Motor neuron (in vitro differentiated cells): ENCODE measurements at regions of chr11 and their contacts with region 1.

Region 1: DNA sequence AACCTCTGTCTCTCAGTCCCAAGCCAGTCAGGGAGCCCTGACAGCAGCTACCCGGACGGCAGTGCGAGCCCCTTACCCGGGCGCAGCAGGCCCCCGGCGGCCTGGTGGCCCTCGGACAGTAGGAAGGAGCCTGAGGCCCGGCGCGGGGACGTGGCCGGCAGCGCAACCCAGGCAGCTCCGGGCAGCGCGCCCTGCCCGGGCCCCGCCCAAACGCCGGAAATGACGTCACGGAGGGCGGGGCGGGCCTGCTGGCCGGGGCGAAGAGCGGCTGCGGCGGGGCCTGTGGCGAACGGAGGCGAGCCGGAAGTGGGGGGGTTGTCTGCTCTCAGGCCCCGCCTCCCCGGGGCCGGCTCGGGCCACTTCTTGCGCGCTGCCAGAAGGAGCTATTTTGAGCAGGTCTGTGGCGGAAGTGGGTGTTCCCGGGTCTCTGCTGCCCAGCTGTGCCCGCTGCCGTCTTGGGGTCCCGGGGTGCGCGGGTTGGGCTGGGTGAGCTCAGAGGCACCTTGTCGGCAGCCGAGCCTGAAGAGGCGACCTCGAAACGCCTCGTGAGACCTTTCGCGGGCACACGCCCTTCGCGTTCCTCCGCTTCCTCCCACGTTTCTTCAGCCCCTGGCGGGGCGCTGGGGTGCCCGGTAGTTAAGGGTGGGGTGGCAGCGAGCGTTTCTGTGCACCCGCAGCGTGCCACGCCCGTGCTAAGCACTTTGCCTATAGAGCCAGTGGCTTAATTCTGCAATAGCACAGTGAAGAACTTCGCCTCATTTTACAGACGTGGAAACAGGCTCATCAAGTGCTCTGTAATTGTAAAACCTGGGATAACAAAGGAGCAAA is at the start of gene C11orf24:
- ATAC-seq: peak; percentile 83 to 95 (median 90)
- H3K4me3 ChIP-seq: peak within 1 kb of the TSS; percentile 77 to 97 (median 95)
- H3K27ac ChIP-seq: peak within 1 kb of the TSS; percentile 96 to 99
- H3K4me1 ChIP-seq: peaks cover 10 to 19% of the 10 kb centered on the region in 2 donors
- total RNA-seq, gene C11orf24: 15.4 to 29.8 (median 24.1) TPM

Region 2: DNA sequence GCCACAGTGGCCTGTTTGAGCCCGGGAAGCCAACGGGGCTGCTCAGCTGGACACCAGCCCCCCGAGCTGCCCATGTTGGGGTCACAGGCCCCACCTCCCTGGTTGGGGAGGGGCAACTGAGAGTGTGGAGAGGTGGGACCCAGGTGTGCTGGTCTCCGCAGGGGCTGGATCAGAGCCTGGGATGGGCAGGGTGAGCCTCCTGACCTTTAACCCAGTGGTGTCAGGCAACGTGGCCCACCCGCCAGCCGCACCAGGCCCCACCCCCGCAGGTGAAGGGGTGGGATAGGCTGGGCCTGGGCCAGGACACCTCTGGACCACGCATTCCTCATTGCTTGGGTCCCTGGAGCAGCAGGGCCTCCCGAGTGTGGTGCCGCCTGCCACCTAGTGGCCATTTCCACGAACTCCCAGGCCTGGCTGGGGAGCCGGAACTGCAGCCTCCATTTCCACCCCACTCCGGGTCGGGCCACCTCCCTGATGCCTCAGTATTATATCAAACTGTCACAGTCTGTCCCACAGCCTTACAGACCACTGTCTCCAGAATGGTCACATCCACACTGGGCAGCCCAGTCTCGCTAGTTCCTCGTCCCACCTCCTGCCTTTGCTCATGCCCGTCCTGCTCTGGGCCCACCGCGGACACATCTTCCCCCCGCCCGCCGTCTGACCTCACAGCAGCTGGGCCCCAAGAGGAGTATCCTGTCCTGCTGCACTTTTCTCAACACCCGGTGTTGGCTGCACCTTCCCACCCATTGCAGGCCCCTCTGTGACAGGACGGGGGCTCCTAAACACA is 175.2 kb after region 1 on chr11:
- in situ Hi-C with region 1: loop called in 2 of 9 experiments (anchors 25 kb)
- ATAC-seq: peak; percentile 93 to 99 (median 97)
- H3K4me3 ChIP-seq: no peak overlapping the region
- H3K27ac ChIP-seq: no peak overlapping the region
- H3K4me1 ChIP-seq: peaks cover under 1 to 8% of the 10 kb centered on the region in 2 donors

Region 3: DNA sequence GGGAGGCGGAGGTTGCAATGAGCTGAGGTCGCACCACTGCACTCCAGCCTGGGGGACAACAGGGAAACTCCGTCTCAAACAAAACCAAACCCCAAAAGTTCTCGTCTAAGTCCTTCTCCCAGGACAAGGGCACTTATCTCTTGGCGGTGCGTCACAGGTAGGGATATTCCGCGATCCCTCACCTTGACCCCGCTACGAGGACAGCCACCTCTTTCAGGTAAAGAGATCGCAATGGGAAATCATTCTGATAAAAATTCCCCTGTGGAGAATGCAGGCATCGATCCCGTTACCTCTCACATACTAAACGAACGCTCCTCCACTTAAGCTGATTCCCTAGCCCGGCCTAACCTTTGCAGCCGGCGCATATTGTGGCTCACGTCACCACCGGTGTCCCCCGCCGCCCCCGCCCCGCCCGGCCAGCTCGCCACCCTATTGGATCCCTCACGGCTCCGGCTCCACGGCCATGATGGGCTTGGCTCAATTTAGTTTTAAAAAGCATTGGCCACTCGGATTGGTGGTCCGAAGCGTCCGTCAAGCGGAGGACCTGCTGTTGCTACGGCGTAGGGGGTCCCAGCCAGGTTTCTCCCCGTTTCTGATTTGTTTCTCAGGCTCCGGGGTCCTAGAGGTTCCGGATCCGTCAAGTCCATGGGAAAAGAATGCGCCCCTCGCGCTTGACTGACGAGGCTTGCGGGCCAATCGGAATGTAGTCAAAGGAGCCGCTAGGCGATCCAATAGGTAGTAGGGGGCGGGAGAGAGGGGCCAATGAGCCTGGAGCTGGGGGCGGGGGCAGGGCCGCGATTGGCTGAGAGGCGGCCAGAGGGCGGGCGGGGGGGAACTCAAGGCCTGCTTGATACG is 188.1 kb after region 1 on chr11:
- in situ Hi-C with region 1: loop called in 1 of 9 experiments (anchors 25 kb)
- ATAC-seq: peak; percentile 80 to 92 (median 88)
- H3K4me3 ChIP-seq: peak overlapping the region; percentile 74 to 98 (median 92)
- H3K27ac ChIP-seq: peak overlapping the region; percentile 95 to 98
- H3K4me1 ChIP-seq: peaks cover 11 to 14% of the 10 kb centered on the region in 2 donors

Region 4: DNA sequence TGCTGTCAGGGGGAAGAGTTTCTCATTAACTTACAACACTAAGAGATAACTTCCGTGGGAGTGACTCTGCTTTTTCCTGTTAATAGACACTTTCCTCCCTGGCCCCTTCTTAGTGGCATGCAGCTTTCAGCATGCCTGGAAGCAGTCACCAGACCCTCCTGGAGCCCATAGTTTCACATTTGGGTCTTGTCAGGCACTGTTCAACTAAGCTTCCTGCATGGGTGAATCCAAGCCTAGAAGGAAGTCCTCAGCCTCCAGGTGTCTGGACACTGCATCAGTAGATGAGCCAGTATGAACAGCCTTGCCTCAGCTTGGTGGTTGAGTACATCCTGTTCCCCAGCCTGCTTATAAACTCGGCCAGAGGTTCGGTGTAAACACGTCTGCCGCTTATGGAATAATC is 256.6 kb after region 1 on chr11:
- in situ Hi-C with region 1: no loop called
- ATAC-seq: no peak
- H3K4me3 ChIP-seq: no peak overlapping the region
- H3K27ac ChIP-seq: no peak overlapping the region
- H3K4me1 ChIP-seq: peaks cover 0 to 4% of the 10 kb centered on the region in 2 donors

Region 5: DNA sequence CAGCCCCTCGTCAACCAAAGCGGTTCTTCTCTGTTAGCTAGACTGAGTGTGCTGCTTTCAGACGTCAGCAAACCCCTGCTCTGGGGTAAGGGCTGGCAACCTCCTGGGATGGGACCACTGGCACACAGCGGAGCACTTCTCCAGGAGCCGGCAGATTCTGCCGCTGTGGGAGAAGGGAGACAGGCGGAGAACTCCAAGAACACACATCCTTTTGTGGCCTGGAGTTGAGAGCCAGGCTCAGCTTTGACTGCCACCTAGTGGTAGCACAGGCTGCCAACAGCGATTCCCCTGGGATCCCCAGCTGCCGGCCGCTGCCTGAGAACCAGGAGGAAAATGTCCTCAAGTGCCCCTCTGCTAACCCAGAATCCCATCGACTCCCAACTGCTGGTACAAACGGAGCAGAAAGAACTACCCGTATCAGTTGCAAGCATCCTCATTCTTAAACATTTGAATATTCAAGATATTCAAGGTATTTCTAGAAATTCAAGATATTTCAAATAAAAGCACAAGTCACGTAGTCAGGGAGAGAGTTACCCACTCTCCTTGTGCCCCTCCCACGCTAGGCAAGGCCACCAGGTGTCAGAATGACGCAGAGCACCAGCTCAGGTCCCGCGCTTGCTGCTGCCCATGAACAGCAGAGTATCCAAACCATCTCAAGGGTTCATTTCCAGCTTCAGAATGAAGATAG is 1398.3 kb after region 1 on chr11:
- in situ Hi-C with region 1: loop called in 1 of 9 experiments (anchors 25 kb)
- ATAC-seq: peak; percentile 10 to 65 (median 55)
- H3K4me3 ChIP-seq: no peak overlapping the region
- H3K27ac ChIP-seq: no peak overlapping the region
- H3K4me1 ChIP-seq: peaks cover 6 to 11% of the 10 kb centered on the region in 2 donors